CD4-positive, alpha-beta T cell (primary cell): ENCODE measurements at regions of chr4 and their contacts with region 1.

Region 1: GRCh38 chr4:88456757-88457306 is at the start of gene HERC5:
- DNase-seq: peak; percentile 83 to 97 (median 90)
- ATAC-seq: peak; percentile 96
- H3K4me3 ChIP-seq: peak within 1 kb of the TSS; percentile 85
- H3K4me3 Mint-ChIP-seq: peak within 1 kb of the TSS; percentile 96
- H3K27ac ChIP-seq: peak within 1 kb of the TSS; percentile 6 to 65
- H3K27ac Mint-ChIP-seq: peak within 1 kb of the TSS; percentile 85
- H3K4me1 ChIP-seq: peaks cover 20% of the 10 kb centered on the region
- H3K4me1 Mint-ChIP-seq: peaks cover 42% of the 10 kb centered on the region
- H3K27me3 ChIP-seq: no peaks in the 10 kb centered on the region
- H3K27me3 Mint-ChIP-seq: no peaks in the 10 kb centered on the region
- CTCF ChIP-seq: peak; percentile 32
- total RNA-seq, gene HERC5: 23.6 to 23.9 TPM

Region 2: GRCh38 chr4:88378691-88379559 is 77.9 kb before region 1 on chr4 and contains the start of gene HERC6:
- CTCF ChIA-PET with region 1: interaction called, 5 read pairs
- POLR2A ChIA-PET with region 1: interaction called, 43 read pairs
- intact Hi-C with region 1: loop called (anchors 2 kb)
- DNase-seq: peak; percentile 48 to 93 (median 59)
- ATAC-seq: peak; percentile 62
- H3K4me3 ChIP-seq: peak within 1 kb of the TSS; percentile 74
- H3K4me3 Mint-ChIP-seq: peak within 1 kb of the TSS; percentile 94
- H3K27ac ChIP-seq: peak within 1 kb of the TSS; percentile 47 to 89
- H3K27ac Mint-ChIP-seq: peak within 1 kb of the TSS; percentile 93
- H3K4me1 ChIP-seq: peaks cover 35% of the 10 kb centered on the region
- H3K4me1 Mint-ChIP-seq: peaks cover 48% of the 10 kb centered on the region
- H3K27me3 ChIP-seq: no peaks in the 10 kb centered on the region
- H3K27me3 Mint-ChIP-seq: no peaks in the 10 kb centered on the region
- CTCF ChIP-seq: peak; percentile 76
- total RNA-seq, gene HERC6: 9.5 to 10.6 TPM

Region 3: DNA sequence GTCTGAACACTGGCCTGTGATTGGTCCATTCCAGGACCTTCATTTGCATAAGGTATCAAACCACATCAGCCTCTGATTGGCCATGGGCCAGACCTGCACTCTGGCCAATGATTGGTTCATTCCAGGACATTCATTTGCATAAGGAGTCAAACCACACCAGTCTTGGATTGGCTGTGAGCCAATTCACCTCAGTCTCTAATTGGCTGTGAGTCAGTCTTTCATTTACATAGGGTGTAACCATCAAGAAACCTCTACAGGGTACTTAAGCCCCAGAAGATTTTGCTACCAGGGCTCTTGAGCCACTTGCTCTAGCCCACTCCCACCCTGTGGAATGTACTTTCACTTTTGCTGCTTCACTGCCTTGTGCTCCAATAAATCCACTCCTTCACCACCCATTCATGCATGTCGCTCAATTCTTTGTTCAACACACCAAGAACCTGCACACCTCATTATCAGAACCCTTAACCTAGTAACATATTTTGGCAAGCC is 14.1 kb before region 1 on chr4:
- CTCF ChIA-PET with region 1: interaction called, 4 read pairs
- POLR2A ChIA-PET with region 1: interaction called, 14 read pairs
- intact Hi-C with region 1: no loop called
- DNase-seq: no peak
- ATAC-seq: no peak
- H3K4me3 ChIP-seq: no peak overlapping the region
- H3K4me3 Mint-ChIP-seq: no peak overlapping the region
- H3K27ac ChIP-seq: no peak overlapping the region
- H3K27ac Mint-ChIP-seq: no peak overlapping the region
- H3K4me1 ChIP-seq: no peaks in the 10 kb centered on the region
- H3K4me1 Mint-ChIP-seq: no peaks in the 10 kb centered on the region
- H3K27me3 ChIP-seq: no peaks in the 10 kb centered on the region
- H3K27me3 Mint-ChIP-seq: no peaks in the 10 kb centered on the region
- CTCF ChIP-seq: no peak

Region 4: GRCh38 chr4:88467392-88467791 is 10.6 kb after region 1 on chr4:
- CTCF ChIA-PET with region 1: no interaction called
- POLR2A ChIA-PET with region 1: interaction called, 11 read pairs
- intact Hi-C with region 1: no loop called
- DNase-seq: no peak
- ATAC-seq: no peak
- H3K4me3 ChIP-seq: no peak overlapping the region
- H3K4me3 Mint-ChIP-seq: no peak overlapping the region
- H3K27ac ChIP-seq: no peak overlapping the region
- H3K27ac Mint-ChIP-seq: no peak overlapping the region
- H3K4me1 ChIP-seq: peaks cover 2% of the 10 kb centered on the region
- H3K4me1 Mint-ChIP-seq: peaks cover 7% of the 10 kb centered on the region
- H3K27me3 ChIP-seq: no peaks in the 10 kb centered on the region
- H3K27me3 Mint-ChIP-seq: no peaks in the 10 kb centered on the region
- CTCF ChIP-seq: no peak

Region 5: GRCh38 chr4:88591787-88592599 is 135.2 kb after region 1 on chr4 and contains the start of gene HERC3:
- CTCF ChIA-PET with region 1: no interaction called
- POLR2A ChIA-PET with region 1: interaction called, 7 read pairs
- intact Hi-C with region 1: loop called in 1 of 2 experiments (anchors 5 kb)
- DNase-seq: peak; percentile 76 to 95 (median 86)
- ATAC-seq: peak; percentile 84
- H3K4me3 ChIP-seq: peak within 1 kb of the TSS; percentile 96
- H3K4me3 Mint-ChIP-seq: peak within 1 kb of the TSS; percentile 100
- H3K27ac ChIP-seq: peak within 1 kb of the TSS; percentile 83 to 93
- H3K27ac Mint-ChIP-seq: peak within 1 kb of the TSS; percentile 99
- H3K4me1 ChIP-seq: peaks cover 23% of the 10 kb centered on the region
- H3K4me1 Mint-ChIP-seq: peaks cover 60% of the 10 kb centered on the region
- H3K27me3 ChIP-seq: no peaks in the 10 kb centered on the region
- H3K27me3 Mint-ChIP-seq: no peaks in the 10 kb centered on the region
- CTCF ChIP-seq: no peak
- total RNA-seq, gene HERC3: 63.1 to 66.4 TPM